ENCODE measurements at regions of chr16 and their contacts with region 1.

Region 1: GRCh38 chr16:4288148-4288921 is 15.5 kb upstream of the TFAP4 start:
- DNase-seq: peak; percentile 94
- H3K4me3 ChIP-seq: peak overlapping the region in 1 of 8 donors; percentile 33
- H3K27ac ChIP-seq: no peak overlapping the region
- H3K4me1 ChIP-seq: peaks cover 6 to 18% (median 10%) of the 10 kb centered on the region in 6 donors
- H3K27me3 ChIP-seq: peaks cover 0 to 23% (median 0%) of the 10 kb centered on the region in 7 donors
- CTCF ChIP-seq: peak; percentile 82 to 97 (median 92)
- POLR2A ChIP-seq: no peak

Region 2: DNA sequence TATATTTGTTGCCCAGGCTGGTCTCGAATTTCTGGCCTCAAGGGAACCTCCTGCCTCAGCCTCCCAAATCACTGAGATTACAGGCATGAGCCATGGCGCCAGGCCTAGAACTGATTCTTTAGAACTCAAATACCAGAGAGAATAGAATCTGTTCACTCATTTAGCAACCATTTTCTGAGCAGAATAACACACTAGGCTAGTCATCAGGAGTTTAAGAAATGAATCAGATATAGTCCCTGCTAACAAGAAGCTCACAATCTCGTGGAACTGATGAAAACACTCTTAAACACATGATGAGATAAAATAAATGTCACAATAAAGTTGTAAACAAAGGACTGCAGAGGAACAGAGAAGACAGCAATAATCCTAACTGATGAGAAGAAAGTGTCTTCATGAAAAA is 116.3 kb before region 1 on chr16:
- intact Hi-C with region 1: no loop called
- DNase-seq: no peak
- H3K4me3 ChIP-seq: no peak overlapping the region
- H3K27ac ChIP-seq: no peak overlapping the region
- H3K4me1 ChIP-seq: no peaks in the 10 kb centered on the region
- H3K27me3 ChIP-seq: no peaks in the 10 kb centered on the region
- CTCF ChIP-seq: no peak
- POLR2A ChIP-seq: no peak

Region 3: GRCh38 chr16:4232541-4233386 is 55.6 kb before region 1 on chr16:
- intact Hi-C with region 1: no loop called
- DNase-seq: no peak
- H3K4me3 ChIP-seq: no peak overlapping the region
- H3K27ac ChIP-seq: no peak overlapping the region
- H3K4me1 ChIP-seq: no peaks in the 10 kb centered on the region
- H3K27me3 ChIP-seq: no peaks in the 10 kb centered on the region
- CTCF ChIP-seq: no peak
- POLR2A ChIP-seq: no peak

Region 4: GRCh38 chr16:4330277-4330874 is 42.0 kb after region 1 on chr16:
- intact Hi-C with region 1: loop called (anchors 5 kb)
- DNase-seq: peak; percentile 96
- H3K4me3 ChIP-seq: no peak overlapping the region
- H3K27ac ChIP-seq: peak overlapping the region in 1 of 8 donors; percentile 74
- H3K4me1 ChIP-seq: peaks cover 19 to 52% (median 44%) of the 10 kb centered on the region in 6 donors
- H3K27me3 ChIP-seq: peaks cover 0 to 33% (median 0%) of the 10 kb centered on the region in 7 donors
- CTCF ChIP-seq: peak; percentile 85 to 98 (median 95)
- POLR2A ChIP-seq: no peak

Measured in spleen (tissue), 13 donors.